ENCODE measurements at regions of chr15 and their contacts with region 1.

Region 1: GRCh38 chr15:48800811-48801455 is 9.9 kb downstream of the CEP152 start:
- DNase-seq: no peak
- ATAC-seq: no peak
- H3K4me3 ChIP-seq: no peak overlapping the region
- H3K27ac ChIP-seq: no peak overlapping the region
- H3K4me1 ChIP-seq: no peaks in the 10 kb centered on the region
- H3K27me3 ChIP-seq: no peaks in the 10 kb centered on the region

Region 2: DNA sequence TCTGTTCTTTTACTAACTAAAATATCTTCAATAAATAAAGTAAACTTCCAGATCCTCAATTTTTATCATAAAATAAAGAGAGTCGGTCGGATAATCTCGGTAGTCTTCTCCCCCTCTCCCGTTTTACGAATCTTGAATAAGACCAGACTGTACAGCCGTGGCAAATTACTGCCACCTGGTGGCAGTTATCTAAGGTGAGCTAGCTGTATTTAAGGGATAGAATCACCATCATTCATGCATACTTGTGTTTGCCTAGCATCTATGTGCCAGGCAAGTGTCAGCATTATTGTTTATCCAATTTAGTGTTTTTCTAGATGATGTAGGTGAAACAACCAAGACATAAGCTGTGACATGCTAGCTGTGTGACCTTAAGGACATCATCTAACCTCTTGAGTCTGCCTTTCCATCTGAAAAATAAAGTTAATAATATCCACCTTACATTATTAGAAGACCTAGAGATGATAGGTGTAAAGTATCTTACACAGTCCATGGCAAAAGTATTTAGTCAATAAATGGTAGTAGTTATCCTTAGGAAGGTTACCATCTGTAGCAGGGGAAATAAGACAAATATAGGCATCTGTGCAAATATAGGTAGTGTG is 448.4 kb before region 1 on chr15:
- intact Hi-C with region 1: loop called in 3 of 4 experiments (anchors 5 to 10 kb)
- DNase-seq: peak in 2 of 3 donors; percentile 26 to 72
- ATAC-seq: peak; percentile 79 to 82
- H3K4me3 ChIP-seq: no peak overlapping the region
- H3K27ac ChIP-seq: no peak overlapping the region
- H3K4me1 ChIP-seq: no peaks in the 10 kb centered on the region
- H3K27me3 ChIP-seq: no peaks in the 10 kb centered on the region

Region 3: DNA sequence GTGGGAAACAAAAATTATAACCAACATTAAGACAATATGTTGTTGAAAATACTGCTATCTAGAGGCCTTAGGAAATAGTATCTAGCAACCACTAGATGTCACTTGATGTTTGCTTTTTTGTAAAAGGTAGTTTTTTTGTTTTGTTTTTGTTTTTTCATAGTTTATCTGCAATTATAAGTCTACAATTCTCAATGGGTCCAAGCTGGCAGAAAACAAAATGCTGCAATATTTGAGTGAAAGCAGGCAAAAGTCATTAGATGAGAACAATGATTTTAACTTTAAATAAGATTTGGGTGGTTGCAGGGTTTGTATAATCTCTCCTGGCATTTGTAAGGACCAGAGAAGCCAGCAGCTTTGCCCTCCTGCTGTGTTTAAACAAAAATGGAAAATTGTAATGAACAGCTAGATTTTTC is 442.7 kb before region 1 on chr15:
- intact Hi-C with region 1: loop called in 3 of 4 experiments (anchors 5 to 10 kb)
- DNase-seq: no peak
- ATAC-seq: peak; percentile 69 to 72
- H3K4me3 ChIP-seq: no peak overlapping the region
- H3K27ac ChIP-seq: no peak overlapping the region
- H3K4me1 ChIP-seq: no peaks in the 10 kb centered on the region
- H3K27me3 ChIP-seq: no peaks in the 10 kb centered on the region

Region 4: DNA sequence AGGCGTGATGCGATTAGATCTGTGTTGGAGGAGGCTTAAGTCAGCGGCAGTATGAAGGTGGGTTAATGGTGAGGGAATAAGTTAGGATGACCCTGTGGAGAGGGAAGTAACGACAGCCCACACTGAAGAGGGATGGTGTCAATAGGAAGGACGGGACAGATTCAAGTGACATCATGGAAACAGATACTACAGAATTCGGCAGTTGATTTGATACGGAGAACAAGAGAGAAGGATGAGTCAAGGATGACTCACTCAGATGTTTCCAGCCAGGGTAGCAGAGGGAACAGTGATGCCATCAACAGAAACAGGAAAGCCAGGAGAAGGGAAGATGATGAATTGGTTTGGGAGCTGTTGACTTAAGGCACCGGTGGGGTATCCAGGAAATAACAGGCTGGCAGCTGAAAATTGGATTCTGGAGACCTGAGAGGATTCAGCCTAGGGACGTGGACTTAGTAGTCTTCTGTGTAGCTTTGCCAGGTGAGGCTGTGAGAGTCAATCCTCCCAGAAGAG is 124.8 kb after region 1 on chr15:
- intact Hi-C with region 1: no loop called
- DNase-seq: no peak
- ATAC-seq: peak; percentile 67 to 86
- H3K4me3 ChIP-seq: no peak overlapping the region
- H3K27ac ChIP-seq: peak overlapping the region; percentile 32
- H3K4me1 ChIP-seq: no peaks in the 10 kb centered on the region
- H3K27me3 ChIP-seq: no peaks in the 10 kb centered on the region